Heart right ventricle (tissue), 16 donors: ENCODE measurements at regions of chr3 and their contacts with region 1.

Region 1: DNA sequence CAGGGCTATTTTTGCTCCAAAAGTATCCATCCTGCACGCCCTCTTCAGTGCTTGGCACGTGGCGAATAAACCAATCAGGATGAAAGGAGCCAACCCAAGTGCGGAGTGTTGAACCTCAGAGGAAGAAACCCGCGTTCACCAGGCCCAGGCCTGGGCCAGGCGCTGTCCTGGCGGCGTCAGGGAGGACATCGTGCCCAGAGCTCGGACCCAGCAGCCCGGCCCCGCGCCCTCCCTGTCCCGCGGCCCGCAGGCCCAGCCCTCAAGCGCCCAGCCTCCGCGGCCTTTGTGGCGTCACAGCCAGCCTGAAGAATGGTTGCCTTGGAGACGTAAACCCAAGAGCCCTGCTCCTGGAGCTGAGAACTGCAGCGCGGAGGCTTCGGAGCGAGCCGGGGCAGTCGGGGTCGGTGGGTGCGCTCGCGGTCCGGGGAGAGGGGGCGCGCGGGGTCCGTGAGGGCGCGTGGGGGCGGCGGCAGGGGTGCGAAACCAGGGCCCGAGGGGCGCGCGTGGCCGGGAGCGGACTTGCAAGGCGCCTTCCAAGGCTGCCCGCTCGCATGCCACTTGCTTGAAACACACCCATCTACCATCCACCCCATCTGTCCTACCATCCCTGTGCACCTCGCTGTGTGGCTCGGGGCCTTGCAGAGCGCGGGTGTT is at the start of gene CFAP100:
- DNase-seq: peak; percentile 25 to 41
- ATAC-seq: peak; percentile 4 to 81 (median 62)
- H3K4me3 ChIP-seq: peak within 1 kb of the TSS in 9 of 10 donors; percentile 14 to 43 (median 34)
- H3K27ac ChIP-seq: no peak within 1 kb of the TSS
- H3K4me1 ChIP-seq: peaks cover 0 to 9% (median 3%) of the 10 kb centered on the region in 9 donors
- H3K27me3 ChIP-seq: peaks cover 0 to 42% (median 14%) of the 10 kb centered on the region in 7 donors
- CTCF ChIP-seq: no peak
- total RNA-seq, gene CFAP100: not detected

Region 2: DNA sequence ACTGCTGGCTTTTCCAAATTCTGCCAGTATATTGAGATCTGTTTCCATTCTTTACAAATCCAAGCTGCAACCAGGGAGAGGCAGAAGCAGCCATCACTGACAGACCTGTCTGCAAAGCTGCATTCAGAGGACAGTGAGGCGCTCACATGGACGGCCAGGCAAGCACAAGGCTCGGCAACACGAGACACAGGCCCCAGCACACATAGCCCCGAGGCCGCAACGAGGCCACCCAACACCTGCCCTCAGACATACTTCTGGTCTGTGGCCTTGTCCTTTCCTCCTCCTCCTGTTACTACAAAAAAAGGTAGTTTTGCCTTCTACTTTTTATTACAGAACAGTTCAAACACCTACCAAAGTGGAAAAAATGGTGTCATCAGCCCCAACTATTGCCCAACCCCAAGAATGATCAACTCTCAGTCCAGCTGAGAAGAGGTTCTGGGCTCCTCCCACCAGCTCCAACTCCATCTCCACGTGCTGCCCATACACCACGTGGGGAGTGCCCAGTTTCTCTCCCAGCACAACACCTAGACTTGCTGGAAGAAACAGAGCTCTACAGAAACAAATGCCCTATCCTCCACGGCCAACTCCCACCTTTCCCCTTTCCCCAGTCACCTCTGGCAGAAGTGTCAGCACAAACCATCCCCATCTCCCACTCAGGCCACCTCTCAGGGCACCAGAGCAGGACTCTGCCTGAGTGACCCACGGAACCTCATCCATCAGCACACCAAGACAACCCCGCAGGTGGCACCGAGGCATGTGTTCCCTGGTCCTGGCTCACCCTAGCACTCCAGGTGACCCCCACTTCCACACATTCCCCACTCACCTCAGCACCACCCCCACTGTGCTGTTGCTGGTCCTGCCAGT is 73.6 kb after region 1 on chr3:
- intact Hi-C with region 1: loop called in 1 of 10 experiments (anchors 10 kb)
- DNase-seq: no peak
- ATAC-seq: peak in 3 of 8 donors; percentile 10 to 44 (median 32)
- H3K4me3 ChIP-seq: no peak overlapping the region
- H3K27ac ChIP-seq: peak overlapping the region in 2 of 10 donors; percentile 2 to 37
- H3K4me1 ChIP-seq: peaks cover 15 to 68% (median 47%) of the 10 kb centered on the region in 9 donors
- H3K27me3 ChIP-seq: no peaks in the 10 kb centered on the region
- CTCF ChIP-seq: no peak